Activated T-helper 1 cell treated with anti-CD3 and anti-CD28 coated beads, Interleukin-12 subunit alpha, Interleukin-12 subunit beta, Interleukin-2, Interleukin-4 antibody, amounts not matched to agents 30 ng/mL and 10 ng/mL and 1 ng/mL, durations not matched to agents 14 hours and 24 hours and 36 hours (primary cell): ENCODE measurements at regions of chr11 and their contacts with region 1.

Region 1: GRCh38 chr11:96254087-96254486 is 88.9 kb downstream of the MAML2 start:
- DNase-seq: peak; percentile 30
- H3K4me3 Mint-ChIP-seq: peak overlapping the region; percentile 77
- H3K27ac Mint-ChIP-seq: peak overlapping the region; percentile 92
- H3K4me1 Mint-ChIP-seq: peaks cover 75% of the 10 kb centered on the region
- H3K27me3 Mint-ChIP-seq: no peaks in the 10 kb centered on the region

Region 2: GRCh38 chr11:96207459-96208449 is 46.3 kb before region 1 on chr11:
- intact Hi-C with region 1: loop called (anchors 2 kb)
- DNase-seq: no peak
- H3K4me3 Mint-ChIP-seq: peak overlapping the region; percentile 72
- H3K27ac Mint-ChIP-seq: peak overlapping the region; percentile 95
- H3K4me1 Mint-ChIP-seq: peaks cover 83% of the 10 kb centered on the region
- H3K27me3 Mint-ChIP-seq: no peaks in the 10 kb centered on the region

Region 3: GRCh38 chr11:96267496-96268032 is 13.5 kb after region 1 on chr11:
- intact Hi-C with region 1: loop called (anchors 1 kb)
- DNase-seq: no peak
- H3K4me3 Mint-ChIP-seq: peak overlapping the region; percentile 43
- H3K27ac Mint-ChIP-seq: peak overlapping the region; percentile 57
- H3K4me1 Mint-ChIP-seq: peaks cover 78% of the 10 kb centered on the region
- H3K27me3 Mint-ChIP-seq: no peaks in the 10 kb centered on the region

Region 4: DNA sequence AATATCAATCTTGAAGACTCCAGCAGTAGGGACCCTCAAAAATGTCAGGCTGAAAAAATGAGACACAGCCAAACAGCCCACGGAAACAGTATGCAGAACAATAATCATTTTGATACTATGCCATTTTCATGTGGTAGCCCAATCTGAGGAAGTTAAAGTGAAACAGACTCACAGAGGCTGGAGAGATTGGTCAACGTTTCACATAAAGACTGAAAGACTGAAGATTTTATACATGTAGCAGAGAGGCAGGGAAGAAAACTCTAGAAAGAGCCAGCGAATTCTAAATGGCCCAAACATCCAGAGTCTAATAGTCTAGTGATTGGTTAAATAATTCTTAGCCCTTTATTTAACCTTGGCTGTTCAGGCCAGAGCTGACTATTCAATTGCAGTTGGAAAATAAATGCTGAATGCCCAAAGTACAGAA is 39.5 kb after region 1 on chr11:
- intact Hi-C with region 1: loop called (anchors 2 kb)
- DNase-seq: no peak
- H3K4me3 Mint-ChIP-seq: no peak overlapping the region
- H3K27ac Mint-ChIP-seq: no peak overlapping the region
- H3K4me1 Mint-ChIP-seq: peaks cover 44% of the 10 kb centered on the region
- H3K27me3 Mint-ChIP-seq: no peaks in the 10 kb centered on the region